Activated CD4-positive, alpha-beta T cell treated with anti-CD3 and anti-CD28 coated beads for 36 hours (primary cell): ENCODE measurements at regions of chr1 and their contacts with region 1.

Region 1: GRCh38 chr1:147627435-147628110 is 42.8 kb downstream of the ACP6 start:
- DNase-seq: peak; percentile 72
- ATAC-seq: peak; percentile 78
- H3K4me3 Mint-ChIP-seq: no peak overlapping the region
- H3K27ac Mint-ChIP-seq: peak overlapping the region; percentile 29
- H3K4me1 Mint-ChIP-seq: peaks cover 35% of the 10 kb centered on the region
- H3K27me3 Mint-ChIP-seq: no peaks in the 10 kb centered on the region

Region 2: GRCh38 chr1:147515046-147515869 is 112.3 kb before region 1 on chr1:
- CTCF ChIA-PET with region 1: interaction called, 23 read pairs
- POLR2A ChIA-PET with region 1: no interaction called
- intact Hi-C with region 1: loop called (anchors 1 kb)
- DNase-seq: peak; percentile 26
- ATAC-seq: peak; percentile 94
- H3K4me3 Mint-ChIP-seq: no peak overlapping the region
- H3K27ac Mint-ChIP-seq: peak overlapping the region; percentile 61
- H3K4me1 Mint-ChIP-seq: peaks cover 18% of the 10 kb centered on the region
- H3K27me3 Mint-ChIP-seq: no peaks in the 10 kb centered on the region

Region 3: DNA sequence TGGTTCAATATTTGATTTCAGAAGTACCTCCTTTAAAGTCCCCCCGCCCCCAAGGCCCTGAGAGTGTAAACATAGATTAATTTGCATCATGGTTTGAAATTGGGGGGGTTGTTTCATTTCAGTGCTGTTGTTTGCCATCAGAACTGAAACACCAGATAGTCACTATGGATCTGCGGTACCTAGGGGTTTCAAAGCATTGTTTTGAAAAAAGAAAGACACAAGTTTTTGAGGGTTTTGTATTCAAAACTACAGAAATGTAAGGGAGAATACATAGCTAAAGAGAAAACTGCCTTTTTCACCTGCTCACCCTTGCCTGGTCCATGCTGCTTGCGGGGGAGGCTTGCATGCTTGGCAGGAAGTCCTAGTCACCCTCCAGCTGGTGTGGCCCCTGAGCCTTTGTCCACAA is 16.5 kb before region 1 on chr1:
- CTCF ChIA-PET with region 1: interaction called, 13 read pairs
- POLR2A ChIA-PET with region 1: no interaction called
- intact Hi-C with region 1: no loop called
- DNase-seq: no peak
- ATAC-seq: no peak
- H3K4me3 Mint-ChIP-seq: no peak overlapping the region
- H3K27ac Mint-ChIP-seq: no peak overlapping the region
- H3K4me1 Mint-ChIP-seq: peaks cover 9% of the 10 kb centered on the region
- H3K27me3 Mint-ChIP-seq: no peaks in the 10 kb centered on the region

Region 4: DNA sequence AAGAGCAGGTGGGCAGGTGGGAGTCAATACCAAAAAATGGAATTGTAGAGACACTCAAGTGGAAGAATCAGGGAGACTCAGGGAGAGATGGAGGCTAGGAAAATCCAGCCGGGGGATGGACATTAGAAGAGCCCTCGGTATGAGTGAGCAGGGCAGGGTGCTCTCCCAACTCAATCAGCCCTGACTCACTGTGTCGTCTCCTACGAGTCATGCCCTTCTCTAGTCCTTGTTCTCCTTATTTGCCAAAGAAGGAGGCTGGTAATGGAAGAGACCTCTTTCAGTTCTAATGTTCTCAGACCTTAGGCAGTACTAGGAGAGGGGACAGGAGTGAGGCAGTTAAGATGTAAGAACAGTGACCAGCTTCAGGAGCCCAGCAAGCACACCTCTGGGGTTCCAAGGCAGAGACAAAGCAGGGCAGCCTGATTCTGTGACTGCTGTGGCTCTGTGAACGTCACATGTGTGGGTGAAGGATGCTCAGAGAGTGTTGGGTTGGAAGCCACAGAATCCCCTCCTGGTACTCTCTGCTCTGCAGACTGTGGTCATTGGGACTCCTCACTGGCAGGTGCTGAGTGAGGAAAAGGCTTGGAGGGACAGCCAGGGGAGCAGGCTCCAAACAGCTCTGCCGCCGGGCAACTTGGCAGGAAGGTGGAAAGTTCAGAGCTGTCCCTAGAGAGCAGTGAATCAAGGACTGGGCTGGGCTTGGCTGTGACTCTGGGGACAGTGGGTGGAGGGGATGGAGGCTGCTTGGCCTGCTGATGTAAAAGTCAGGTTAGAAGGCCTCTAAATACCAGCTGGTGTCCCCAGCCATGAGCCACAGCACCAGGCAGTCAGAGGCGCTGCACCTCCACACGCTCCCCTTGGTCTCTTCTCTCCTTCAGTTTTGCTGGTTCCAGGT is 143.9 kb after region 1 on chr1:
- CTCF ChIA-PET with region 1: no interaction called
- POLR2A ChIA-PET with region 1: no interaction called
- intact Hi-C with region 1: no loop called
- DNase-seq: peak; percentile 19
- ATAC-seq: peak; percentile 58
- H3K4me3 Mint-ChIP-seq: no peak overlapping the region
- H3K27ac Mint-ChIP-seq: no peak overlapping the region
- H3K4me1 Mint-ChIP-seq: peaks cover 6% of the 10 kb centered on the region
- H3K27me3 Mint-ChIP-seq: peaks cover 15% of the 10 kb centered on the region

Region 5: GRCh38 chr1:147808025-147808424 is 180.5 kb after region 1 on chr1:
- CTCF ChIA-PET with region 1: no interaction called
- POLR2A ChIA-PET with region 1: no interaction called
- intact Hi-C with region 1: no loop called
- DNase-seq: no peak
- ATAC-seq: no peak
- H3K4me3 Mint-ChIP-seq: no peak overlapping the region
- H3K27ac Mint-ChIP-seq: no peak overlapping the region
- H3K4me1 Mint-ChIP-seq: peaks cover 2% of the 10 kb centered on the region
- H3K27me3 Mint-ChIP-seq: peaks cover 5% of the 10 kb centered on the region